ENCODE measurements at regions of chr14 and their contacts with region 1.

Region 1: GRCh38 chr14:70027785-70028428 is 148.7 kb downstream of the SMOC1 start:
- DNase-seq: peak; percentile 88
- H3K4me3 ChIP-seq: peak overlapping the region in 1 of 2 experiments; percentile 50; a peak in 1 of 4 replicates
- H3K27ac ChIP-seq: no peak overlapping the region
- H3K4me1 ChIP-seq: no peaks in the 10 kb centered on the region
- H3K27me3 ChIP-seq: no peaks in the 10 kb centered on the region
- CTCF ChIP-seq: peak; percentile 60
- EP300 ChIP-seq: no peak
- RAD21 ChIP-seq: peak; percentile 97

Region 2: GRCh38 chr14:69808919-69809808 is 218.7 kb before region 1 on chr14:
- CTCF ChIA-PET with region 1: interaction called, 238 read pairs
- POLR2A ChIA-PET with region 1: no interaction called
- DNase-seq: no peak
- H3K4me3 ChIP-seq: no peak overlapping the region
- H3K27ac ChIP-seq: no peak overlapping the region
- H3K4me1 ChIP-seq: no peaks in the 10 kb centered on the region; a peak in 1 of 4 replicates
- H3K27me3 ChIP-seq: no peaks in the 10 kb centered on the region; the same call in 1 of the 2 replicates
- CTCF ChIP-seq: no peak
- EP300 ChIP-seq: no peak
- RAD21 ChIP-seq: no peak

Region 3: DNA sequence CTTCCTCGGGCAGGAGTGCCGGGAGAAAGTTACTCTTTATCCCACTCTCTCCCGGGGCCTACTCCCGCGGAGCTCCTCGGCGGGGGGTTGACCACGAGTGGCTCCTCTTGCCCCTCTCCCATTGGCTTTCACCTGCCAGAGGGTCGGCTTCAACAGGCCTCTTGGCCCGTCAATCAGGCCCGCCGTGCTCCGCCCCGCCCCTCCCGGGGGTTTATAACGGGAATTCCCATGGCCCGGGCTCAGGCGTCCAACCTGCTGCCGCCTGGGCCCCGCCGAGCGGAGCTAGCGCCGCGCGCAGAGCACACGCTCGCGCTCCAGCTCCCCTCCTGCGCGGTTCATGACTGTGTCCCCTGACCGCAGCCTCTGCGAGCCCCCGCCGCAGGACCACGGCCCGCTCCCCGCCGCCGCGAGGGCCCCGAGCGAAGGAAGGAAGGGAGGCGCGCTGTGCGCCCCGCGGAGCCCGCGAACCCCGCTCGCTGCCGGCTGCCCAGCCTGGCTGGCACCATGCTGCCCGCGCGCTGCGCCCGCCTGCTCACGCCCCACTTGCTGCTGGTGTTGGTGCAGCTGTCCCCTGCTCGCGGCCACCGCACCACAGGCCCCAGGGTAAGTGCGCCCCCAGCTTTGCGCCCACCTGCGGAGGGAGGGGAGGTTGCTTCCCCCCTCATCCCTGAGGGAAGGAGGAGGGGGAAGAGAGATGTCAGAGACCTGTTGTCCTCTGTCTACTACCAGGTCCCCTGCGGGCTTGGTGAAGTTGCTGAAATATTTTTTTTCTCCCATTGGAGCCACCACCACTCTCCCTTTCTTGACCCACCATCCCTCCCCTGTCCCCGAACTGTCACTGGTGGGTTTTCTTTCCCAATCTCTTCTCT is 148.5 kb before region 1 on chr14 and contains the start of gene SMOC1:
- CTCF ChIA-PET with region 1: interaction called, 113 read pairs
- POLR2A ChIA-PET with region 1: interaction called, 4 read pairs
- DNase-seq: peak; percentile 87
- H3K4me3 ChIP-seq: peak within 1 kb of the TSS in 1 of 2 experiments; percentile 50; a peak in 2 of 4 replicates
- H3K27ac ChIP-seq: peak within 1 kb of the TSS in 1 of 2 experiments; percentile 43; a peak in 1 of 4 replicates
- H3K4me1 ChIP-seq: peaks cover 0 to 28% of the 10 kb centered on the region in 2 experiments; a peak in 1 of 4 replicates
- H3K27me3 ChIP-seq: 0 out of 2 replicates have a peak, but pooled peaks cover 13% of the 10 kb centered on the region
- CTCF ChIP-seq: no peak
- EP300 ChIP-seq: no peak
- RAD21 ChIP-seq: no peak
- polyA plus RNA-seq, gene SMOC1: not detected in 2 replicates

Region 4: DNA sequence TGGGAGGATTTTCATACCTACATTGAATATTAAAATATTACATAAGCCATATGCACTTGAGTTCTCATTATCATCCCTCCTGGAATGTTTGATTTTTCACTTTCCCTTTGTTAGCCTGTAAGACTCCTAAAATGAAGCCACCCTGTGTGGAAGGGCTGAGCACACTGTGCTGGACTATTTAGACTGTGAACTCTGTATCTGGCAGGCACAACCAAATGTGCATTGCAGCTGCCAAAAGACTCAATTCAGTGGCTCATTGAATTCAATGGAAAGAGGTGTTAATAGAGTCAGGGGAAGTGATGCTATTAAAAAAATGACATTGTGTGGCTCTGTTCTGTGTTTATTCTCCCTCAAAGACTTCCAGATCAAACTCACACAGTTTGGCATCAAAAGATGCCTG is 37.6 kb before region 1 on chr14:
- CTCF ChIA-PET with region 1: interaction called, 10 read pairs
- POLR2A ChIA-PET with region 1: no interaction called
- DNase-seq: no peak
- H3K4me3 ChIP-seq: no peak overlapping the region
- H3K27ac ChIP-seq: no peak overlapping the region
- H3K4me1 ChIP-seq: no peaks in the 10 kb centered on the region; a peak in 1 of 4 replicates
- H3K27me3 ChIP-seq: no peaks in the 10 kb centered on the region
- CTCF ChIP-seq: no peak
- EP300 ChIP-seq: no peak
- RAD21 ChIP-seq: no peak

Region 5: DNA sequence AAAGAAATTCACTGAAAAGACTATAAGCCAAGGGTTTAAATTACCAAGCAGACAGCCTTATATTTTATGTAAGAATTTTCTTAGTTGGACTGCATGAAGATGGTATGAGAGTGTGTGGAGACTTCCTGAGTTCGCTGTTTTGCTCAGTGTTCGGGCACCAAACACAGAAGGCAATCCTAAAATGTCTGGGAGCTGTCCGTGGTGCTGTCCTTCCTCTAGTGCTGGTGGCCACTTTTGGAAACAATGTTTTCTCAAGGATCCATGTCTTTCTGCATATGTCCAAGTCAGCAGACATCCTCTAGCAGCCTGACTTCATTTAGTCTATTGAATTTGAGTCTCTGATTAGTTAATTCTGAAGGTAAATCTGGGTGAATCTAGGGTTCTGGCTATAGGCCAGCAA is 25.1 kb after region 1 on chr14:
- CTCF ChIA-PET with region 1: interaction called, 12 read pairs
- POLR2A ChIA-PET with region 1: no interaction called
- DNase-seq: no peak
- H3K4me3 ChIP-seq: no peak overlapping the region
- H3K27ac ChIP-seq: no peak overlapping the region
- H3K4me1 ChIP-seq: peaks cover 0 to 17% of the 10 kb centered on the region in 2 experiments; a peak in 2 of 4 replicates
- H3K27me3 ChIP-seq: no peaks in the 10 kb centered on the region
- CTCF ChIP-seq: no peak
- EP300 ChIP-seq: no peak
- RAD21 ChIP-seq: no peak

Region 6: DNA sequence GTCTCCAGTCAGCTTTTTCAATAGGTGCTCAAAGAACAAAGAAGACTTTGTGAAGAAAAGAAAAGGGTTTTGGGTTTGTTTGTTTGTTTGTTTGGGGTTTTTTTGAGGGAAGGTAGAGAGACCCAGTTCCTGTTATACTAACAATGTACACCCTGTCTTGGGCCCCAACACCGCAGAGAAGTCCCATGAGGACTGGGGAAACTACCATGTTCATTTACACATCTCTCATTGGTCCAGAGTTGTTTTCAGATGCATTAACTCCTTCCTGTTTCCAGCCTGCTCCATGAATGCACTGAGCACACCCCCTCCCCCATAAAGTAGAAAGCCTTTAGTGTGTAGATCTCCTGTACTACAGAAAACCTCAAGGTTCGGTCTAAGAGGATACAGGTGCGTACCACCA is 211.9 kb after region 1 on chr14:
- CTCF ChIA-PET with region 1: no interaction called
- POLR2A ChIA-PET with region 1: no interaction called
- DNase-seq: no peak
- H3K4me3 ChIP-seq: no peak overlapping the region
- H3K27ac ChIP-seq: no peak overlapping the region
- H3K4me1 ChIP-seq: no peaks in the 10 kb centered on the region
- H3K27me3 ChIP-seq: no peaks in the 10 kb centered on the region
- CTCF ChIP-seq: no peak
- EP300 ChIP-seq: no peak
- RAD21 ChIP-seq: no peak